Ovary (tissue), 10 donors: ENCODE measurements at regions of chr22 and their contacts with region 1.

Region 1: DNA sequence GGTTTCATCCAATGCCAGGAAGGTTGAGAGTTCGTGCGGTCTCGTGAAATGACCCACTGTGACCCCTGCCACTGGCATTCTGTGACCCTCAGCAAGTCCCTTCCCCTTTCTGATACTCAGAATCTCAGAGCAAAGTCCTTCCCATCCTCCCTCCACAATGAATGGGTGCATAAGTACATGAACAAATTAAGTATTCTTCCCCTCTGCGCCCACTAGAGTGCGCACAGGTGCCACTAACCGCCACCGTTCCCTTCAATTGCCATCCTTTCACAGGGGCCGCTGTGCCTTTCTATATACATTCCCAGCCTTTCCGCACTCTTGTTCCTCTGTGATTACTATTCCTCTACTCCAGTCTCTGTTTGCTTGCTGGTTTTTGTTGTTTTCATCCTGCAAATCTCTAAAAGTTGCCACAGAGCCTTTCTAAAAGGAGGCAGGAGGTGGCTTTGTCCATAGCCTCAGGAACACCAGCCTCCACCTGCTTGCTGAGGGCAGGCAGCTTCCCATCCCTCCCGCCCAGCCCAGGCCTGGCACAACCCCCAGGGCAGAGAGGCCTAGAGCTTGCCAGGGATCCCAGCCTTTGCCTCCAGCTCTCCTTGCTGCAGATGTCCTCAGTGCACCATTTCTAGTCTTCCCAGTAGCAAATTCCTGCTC is 6.7 kb upstream of the AP1B1 start:
- DNase-seq: peak; percentile 58 to 79 (median 73)
- H3K4me3 ChIP-seq: no peak overlapping the region
- H3K27ac ChIP-seq: no peak overlapping the region
- H3K4me1 ChIP-seq: no peaks in the 10 kb centered on the region
- H3K27me3 ChIP-seq: no peaks in the 10 kb centered on the region
- CTCF ChIP-seq: peak; percentile 56 to 71 (median 67)
- EP300 ChIP-seq: no peak
- POLR2A ChIP-seq: no peak

Region 2: DNA sequence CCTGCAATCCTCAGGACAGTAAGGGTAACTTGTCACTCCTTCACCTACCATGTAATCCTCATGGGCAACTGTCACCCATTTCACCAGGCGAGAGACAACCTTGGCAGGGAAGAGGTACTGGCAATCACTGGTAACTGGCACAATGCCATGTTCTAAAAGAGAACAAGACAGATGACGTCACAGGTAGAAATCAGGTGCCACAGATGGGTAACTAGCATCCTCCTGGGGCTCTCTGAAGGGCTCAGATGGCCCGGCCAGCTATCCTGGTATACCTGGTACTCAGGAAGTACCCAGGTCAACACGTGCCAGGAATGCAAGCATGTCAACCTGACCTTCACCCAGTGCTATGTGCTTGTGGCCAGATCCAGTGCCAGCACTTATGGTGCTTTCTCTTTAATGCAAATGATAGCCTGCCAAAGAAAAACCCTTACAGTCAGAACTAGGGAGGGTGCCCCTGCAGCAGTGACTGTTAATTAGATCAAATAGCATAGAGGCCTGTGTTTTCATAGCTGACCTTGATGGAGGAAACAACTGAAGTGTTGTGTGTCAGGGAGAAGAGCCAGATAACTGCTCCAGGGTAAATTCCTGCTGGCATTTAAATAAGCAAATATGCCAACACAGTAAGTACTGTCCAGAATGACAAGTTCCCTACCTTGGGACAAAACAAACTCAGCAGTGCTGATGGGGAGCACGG is 122.3 kb after region 1 on chr22:
- intact Hi-C with region 1: loop called in 2 of 4 experiments (anchors 10 kb)
- DNase-seq: no peak
- H3K4me3 ChIP-seq: no peak overlapping the region
- H3K27ac ChIP-seq: no peak overlapping the region
- H3K4me1 ChIP-seq: no peaks in the 10 kb centered on the region
- H3K27me3 ChIP-seq: no peaks in the 10 kb centered on the region
- CTCF ChIP-seq: no peak
- EP300 ChIP-seq: no peak
- POLR2A ChIP-seq: no peak

Region 3: GRCh38 chr22:29524440-29525191 is 129.6 kb after region 1 on chr22:
- intact Hi-C with region 1: loop called in 2 of 4 experiments (anchors 10 kb)
- DNase-seq: peak in 4 of 5 donors; percentile 13 to 61 (median 31)
- H3K4me3 ChIP-seq: no peak overlapping the region
- H3K27ac ChIP-seq: no peak overlapping the region
- H3K4me1 ChIP-seq: no peaks in the 10 kb centered on the region
- H3K27me3 ChIP-seq: no peaks in the 10 kb centered on the region
- CTCF ChIP-seq: no peak
- EP300 ChIP-seq: no peak
- POLR2A ChIP-seq: no peak